ENCODE measurements at regions of chr12 and their contacts with region 1.

Region 1: GRCh38 chr12:124842073-124842749 is 21.5 kb downstream of the SCARB1 start:
- DNase-seq: no peak
- H3K4me3 ChIP-seq: no peak overlapping the region
- H3K27ac ChIP-seq: no peak overlapping the region
- H3K4me1 ChIP-seq: peaks cover 0 to 9% (median 6%) of the 10 kb centered on the region in 4 experiments; a peak in 5 of 7 replicates
- H3K27me3 ChIP-seq: no peaks in the 10 kb centered on the region
- CTCF ChIP-seq: no peak
- EP300 ChIP-seq: no peak
- POLR2A ChIP-seq: no peak
- RAD21 ChIP-seq: no peak

Region 2: DNA sequence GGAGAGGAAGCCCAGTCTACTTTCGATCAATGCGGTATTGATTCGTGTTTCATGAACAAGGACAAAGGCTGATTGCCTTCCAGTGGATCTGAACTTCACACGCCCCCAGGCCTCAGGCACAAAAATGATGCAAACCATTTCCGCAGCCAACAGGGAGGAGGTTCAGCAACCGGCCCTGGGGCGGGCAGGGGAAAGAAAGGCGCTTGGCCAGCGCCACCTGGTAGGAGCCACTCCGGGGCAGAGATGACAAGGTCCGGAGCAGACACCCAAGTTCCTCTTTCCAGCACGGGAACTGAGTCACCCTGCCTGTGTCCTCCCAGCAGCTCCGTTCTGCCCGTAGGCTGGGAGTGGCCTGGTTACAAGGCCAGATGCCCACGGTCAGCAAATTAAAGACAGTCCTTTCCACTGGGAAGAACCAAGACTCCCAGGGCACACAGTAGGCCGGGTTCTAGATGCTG is 114.9 kb before region 1 on chr12:
- CTCF ChIA-PET with region 1: no interaction called
- POLR2A ChIA-PET with region 1: no interaction called
- DNase-seq: no peak
- H3K4me3 ChIP-seq: no peak overlapping the region
- H3K27ac ChIP-seq: no peak overlapping the region
- H3K4me1 ChIP-seq: no peaks in the 10 kb centered on the region
- H3K27me3 ChIP-seq: no peaks in the 10 kb centered on the region
- CTCF ChIP-seq: no peak
- EP300 ChIP-seq: no peak
- POLR2A ChIP-seq: no peak
- RAD21 ChIP-seq: no peak

Region 3: GRCh38 chr12:124854637-124855184 is 12.5 kb after region 1 on chr12:
- CTCF ChIA-PET with region 1: interaction called, 10 read pairs
- POLR2A ChIA-PET with region 1: interaction called, 6 read pairs
- DNase-seq: no peak
- H3K4me3 ChIP-seq: no peak overlapping the region
- H3K27ac ChIP-seq: no peak overlapping the region
- H3K4me1 ChIP-seq: no peaks in the 10 kb centered on the region; a peak in 1 of 7 replicates
- H3K27me3 ChIP-seq: no peaks in the 10 kb centered on the region
- CTCF ChIP-seq: peak in 1 of 3 experiments; percentile 4; a peak in 1 of 4 replicates
- EP300 ChIP-seq: no peak
- POLR2A ChIP-seq: no peak
- RAD21 ChIP-seq: no peak